ENCODE measurements at regions of chrX and their contacts with region 1.

Region 1: DNA sequence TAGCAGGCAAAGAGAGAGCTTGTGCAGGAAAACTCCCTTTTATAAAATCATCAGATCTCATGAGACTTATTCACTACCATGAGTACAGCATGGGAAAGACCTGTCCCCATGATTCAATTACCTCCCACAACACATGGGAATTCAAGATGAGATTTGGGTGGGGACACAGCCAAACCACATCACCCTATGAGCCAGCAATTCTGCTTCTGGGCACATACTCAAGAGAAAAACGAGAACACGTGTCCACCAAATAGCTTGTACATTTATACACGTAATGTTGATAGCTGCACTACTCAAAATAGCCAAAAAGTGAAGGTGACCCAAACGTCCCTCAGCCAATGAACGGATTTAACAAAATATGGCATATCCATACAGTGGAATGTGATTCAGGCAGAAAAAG is 94.5 kb upstream of the DHRSX start:
- DNase-seq: no peak
- ATAC-seq: no peak
- H3K4me3 ChIP-seq: no peak overlapping the region
- H3K4me3 Mint-ChIP-seq: no peak overlapping the region
- H3K27ac ChIP-seq: no peak overlapping the region
- H3K27ac Mint-ChIP-seq: peak overlapping the region in 4 of 9 donors; percentile 3 to 59 (median 23)
- H3K4me1 ChIP-seq: no peaks in the 10 kb centered on the region
- H3K4me1 Mint-ChIP-seq: peaks cover 0 to 20% (median 12%) of the 10 kb centered on the region in 7 donors
- H3K27me3 ChIP-seq: no peaks in the 10 kb centered on the region
- H3K27me3 Mint-ChIP-seq: no peaks in the 10 kb centered on the region

Region 2: GRCh38 chrX:1649621-1650020 is 945.6 kb before region 1 on chrX:
- CTCF ChIA-PET with region 1: no interaction called
- POLR2A ChIA-PET with region 1: no interaction called
- intact Hi-C with region 1: loop called (anchors 1 kb)
- DNase-seq: no peak
- ATAC-seq: no peak
- H3K4me3 ChIP-seq: no peak overlapping the region
- H3K4me3 Mint-ChIP-seq: no peak overlapping the region
- H3K27ac ChIP-seq: no peak overlapping the region
- H3K27ac Mint-ChIP-seq: no peak overlapping the region
- H3K4me1 ChIP-seq: no peaks in the 10 kb centered on the region
- H3K4me1 Mint-ChIP-seq: peaks cover 0 to 9% (median 6%) of the 10 kb centered on the region in 7 donors
- H3K27me3 ChIP-seq: no peaks in the 10 kb centered on the region
- H3K27me3 Mint-ChIP-seq: peaks cover 0 to 8% (median 3%) of the 10 kb centered on the region in 5 donors

Region 3: DNA sequence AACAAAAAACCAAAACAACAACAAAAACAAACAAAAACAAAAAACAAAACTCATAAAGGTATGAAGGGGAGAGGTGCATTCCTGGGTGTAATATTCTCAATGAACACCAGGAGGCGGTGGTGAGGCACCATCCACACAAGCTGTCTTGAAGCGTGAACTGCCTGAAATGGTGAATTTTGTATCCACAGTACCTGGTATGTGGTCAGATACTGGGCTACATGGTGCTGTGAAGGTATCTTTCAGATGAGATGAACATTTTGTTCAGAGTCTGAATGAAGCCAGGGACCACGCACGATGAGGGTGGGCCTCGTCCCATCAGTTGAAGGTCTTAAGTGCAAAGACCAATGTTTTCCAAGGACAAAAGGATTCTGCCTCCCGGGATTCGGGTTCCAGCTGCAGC is 921.9 kb before region 1 on chrX:
- CTCF ChIA-PET with region 1: no interaction called
- POLR2A ChIA-PET with region 1: no interaction called
- intact Hi-C with region 1: loop called in 1 of 2 experiments (anchors 1 kb)
- DNase-seq: peak in 7 of 9 donors; percentile 20 to 49 (median 44)
- ATAC-seq: peak; percentile 48
- H3K4me3 ChIP-seq: no peak overlapping the region
- H3K4me3 Mint-ChIP-seq: no peak overlapping the region
- H3K27ac ChIP-seq: no peak overlapping the region
- H3K27ac Mint-ChIP-seq: peak overlapping the region in 1 of 9 donors; percentile 7
- H3K4me1 ChIP-seq: no peaks in the 10 kb centered on the region
- H3K4me1 Mint-ChIP-seq: peaks cover 0 to 23% (median 4%) of the 10 kb centered on the region in 7 donors
- H3K27me3 ChIP-seq: no peaks in the 10 kb centered on the region
- H3K27me3 Mint-ChIP-seq: no peaks in the 10 kb centered on the region

Region 4: GRCh38 chrX:3326681-3327080 is 731.4 kb after region 1 on chrX:
- CTCF ChIA-PET with region 1: no interaction called
- POLR2A ChIA-PET with region 1: no interaction called
- intact Hi-C with region 1: no loop called
- DNase-seq: no peak
- ATAC-seq: no peak
- H3K4me3 ChIP-seq: no peak overlapping the region
- H3K4me3 Mint-ChIP-seq: no peak overlapping the region
- H3K27ac ChIP-seq: no peak overlapping the region
- H3K27ac Mint-ChIP-seq: no peak overlapping the region
- H3K4me1 ChIP-seq: no peaks in the 10 kb centered on the region
- H3K4me1 Mint-ChIP-seq: no peaks in the 10 kb centered on the region
- H3K27me3 ChIP-seq: no peaks in the 10 kb centered on the region
- H3K27me3 Mint-ChIP-seq: no peaks in the 10 kb centered on the region

Region 5: DNA sequence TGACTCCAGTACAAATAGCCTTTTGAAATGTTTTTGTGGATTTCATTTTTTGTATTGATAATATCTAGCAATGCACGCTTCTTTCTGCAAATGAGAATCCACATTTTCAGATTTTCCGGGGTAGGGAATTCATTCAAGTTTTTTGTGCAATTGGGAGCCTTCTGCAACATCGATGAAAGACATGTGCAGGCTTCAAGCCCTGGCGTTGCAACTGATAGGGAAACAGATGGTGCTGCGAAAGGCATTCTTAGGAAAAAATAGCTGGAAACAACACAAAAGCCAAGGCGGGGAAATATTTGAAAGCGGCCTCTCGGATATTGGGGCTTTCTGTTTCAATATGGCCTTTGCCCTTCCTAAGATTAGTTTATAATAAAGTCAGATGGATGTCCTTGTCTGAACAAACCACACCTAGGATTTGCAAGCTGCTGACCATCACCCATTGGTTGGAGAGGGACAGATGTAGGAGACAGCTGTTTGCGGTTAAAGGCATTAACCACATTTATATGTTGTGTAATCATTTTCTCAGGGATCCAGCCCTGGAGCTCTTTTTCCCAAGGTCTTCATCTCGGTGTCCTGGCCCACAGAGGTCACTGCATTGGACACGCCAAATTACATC is 981.7 kb after region 1 on chrX:
- CTCF ChIA-PET with region 1: no interaction called
- POLR2A ChIA-PET with region 1: no interaction called
- intact Hi-C with region 1: no loop called
- DNase-seq: no peak
- ATAC-seq: no peak
- H3K4me3 ChIP-seq: no peak overlapping the region
- H3K4me3 Mint-ChIP-seq: no peak overlapping the region
- H3K27ac ChIP-seq: no peak overlapping the region
- H3K27ac Mint-ChIP-seq: no peak overlapping the region
- H3K4me1 ChIP-seq: no peaks in the 10 kb centered on the region
- H3K4me1 Mint-ChIP-seq: peaks cover 0 to 1% (median 0%) of the 10 kb centered on the region in 7 donors
- H3K27me3 ChIP-seq: no peaks in the 10 kb centered on the region
- H3K27me3 Mint-ChIP-seq: peaks cover 0 to 2% (median 0%) of the 10 kb centered on the region in 5 donors